WTC11 (cell line): ENCODE measurements at regions of chr1 and their contacts with region 1.

Region 1: DNA sequence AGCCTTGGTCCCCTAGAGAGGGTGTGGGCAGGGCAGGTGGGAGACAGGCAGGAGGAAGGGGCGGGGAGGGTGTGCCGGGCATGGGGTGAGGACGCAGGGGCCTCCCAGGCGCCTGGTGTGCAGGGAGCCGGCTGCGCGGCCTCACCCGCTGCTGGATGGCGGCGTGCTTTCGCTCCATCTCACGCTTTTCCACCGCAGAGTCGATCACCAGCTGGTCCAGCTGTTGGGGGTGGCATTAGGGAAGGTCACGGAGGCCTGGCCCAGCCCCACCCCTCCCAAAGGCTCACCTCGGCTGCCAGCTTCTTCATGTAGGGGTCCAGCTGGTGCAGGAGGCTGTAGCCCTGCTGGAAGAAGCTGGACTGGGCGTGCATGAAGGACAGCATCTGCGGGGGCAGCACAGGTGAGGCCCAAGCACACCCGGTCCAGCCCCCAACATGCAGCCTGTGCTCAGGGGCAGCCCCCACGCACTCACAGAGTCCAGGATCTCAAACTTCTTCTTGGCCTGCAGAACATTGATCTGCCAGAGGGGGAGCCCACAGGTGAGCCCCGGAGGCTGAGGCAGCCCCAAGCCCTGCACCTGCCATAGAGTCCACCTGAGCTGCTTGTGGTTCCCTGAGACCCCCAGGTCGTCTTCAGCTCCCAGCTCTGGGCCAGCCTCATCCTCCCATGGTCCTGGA is 7.9 kb downstream of the ACAP3 start:
- DNase-seq: peak; percentile 66
- ATAC-seq: peak; percentile 59
- H3K4me3 Mint-ChIP-seq: no peak overlapping the region
- H3K27ac Mint-ChIP-seq: no peak overlapping the region
- H3K4me1 Mint-ChIP-seq: peaks cover 3% of the 10 kb centered on the region; the same call in 1 of the 2 replicates
- H3K27me3 Mint-ChIP-seq: no peaks in the 10 kb centered on the region
- CTCF ChIP-seq: no peak

Region 2: GRCh38 chr1:1315435-1315954 is 15.7 kb after region 1 on chr1:
- CTCF ChIA-PET with region 1: interaction called, 10 read pairs
- POLR2A ChIA-PET with region 1: interaction called, 7 read pairs
- DNase-seq: peak; percentile 67
- ATAC-seq: peak; percentile 74
- H3K4me3 Mint-ChIP-seq: peak overlapping the region; percentile 43; the same call in 1 of the 2 replicates
- H3K27ac Mint-ChIP-seq: peak overlapping the region; percentile 91
- H3K4me1 Mint-ChIP-seq: peaks cover 15% of the 10 kb centered on the region
- H3K27me3 Mint-ChIP-seq: no peaks in the 10 kb centered on the region
- CTCF ChIP-seq: no peak